Left lung (tissue), 14 donors: ENCODE measurements at regions of chr3 and their contacts with region 1.

Region 1: DNA sequence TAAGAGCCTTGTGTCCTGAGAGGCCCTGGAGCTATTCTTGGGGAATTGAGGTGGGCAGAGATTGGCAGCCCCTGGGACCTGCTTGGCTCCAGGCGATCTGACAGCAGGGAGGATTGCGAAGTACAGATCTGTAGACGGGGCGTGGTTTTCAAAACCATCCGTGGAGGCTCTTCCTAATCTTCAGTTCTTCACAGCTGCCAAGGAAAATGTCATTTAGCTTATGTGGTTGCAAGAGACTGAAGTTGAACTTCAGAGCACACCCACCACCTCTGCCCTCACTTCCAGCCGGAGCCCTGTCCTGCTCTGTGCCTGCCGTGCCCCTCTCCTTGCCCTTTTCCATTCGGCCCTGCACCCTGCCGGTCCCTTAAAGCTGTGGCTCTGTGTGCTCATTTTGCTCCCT is 12.9 kb downstream of the NISCH start:
- DNase-seq: peak in 1 of 4 donors; percentile 53
- ATAC-seq: no peak
- H3K4me3 ChIP-seq: no peak overlapping the region
- H3K27ac ChIP-seq: no peak overlapping the region
- H3K4me1 ChIP-seq: peaks cover 3 to 55% of the 10 kb centered on the region in 2 donors
- H3K27me3 ChIP-seq: no peaks in the 10 kb centered on the region
- CTCF ChIP-seq: no peak

Region 2: GRCh38 chr3:52536369-52537164 is 68.2 kb after region 1 on chr3 and contains the start of gene UQCC5:
- intact Hi-C with region 1: loop called in 1 of 2 experiments (anchors 10 kb)
- DNase-seq: peak; percentile 96 to 99 (median 99)
- ATAC-seq: peak; percentile 92
- H3K4me3 ChIP-seq: peak within 1 kb of the TSS; percentile 71 to 80
- H3K27ac ChIP-seq: peak within 1 kb of the TSS; percentile 88 to 89
- H3K4me1 ChIP-seq: peaks cover 21 to 81% of the 10 kb centered on the region in 2 donors
- H3K27me3 ChIP-seq: peaks cover 0 to 31% of the 10 kb centered on the region in 2 donors
- CTCF ChIP-seq: no peak
- polyA plus RNA-seq, gene UQCC5: 9.6 to 19.1 (median 14.9) TPM

Region 3: DNA sequence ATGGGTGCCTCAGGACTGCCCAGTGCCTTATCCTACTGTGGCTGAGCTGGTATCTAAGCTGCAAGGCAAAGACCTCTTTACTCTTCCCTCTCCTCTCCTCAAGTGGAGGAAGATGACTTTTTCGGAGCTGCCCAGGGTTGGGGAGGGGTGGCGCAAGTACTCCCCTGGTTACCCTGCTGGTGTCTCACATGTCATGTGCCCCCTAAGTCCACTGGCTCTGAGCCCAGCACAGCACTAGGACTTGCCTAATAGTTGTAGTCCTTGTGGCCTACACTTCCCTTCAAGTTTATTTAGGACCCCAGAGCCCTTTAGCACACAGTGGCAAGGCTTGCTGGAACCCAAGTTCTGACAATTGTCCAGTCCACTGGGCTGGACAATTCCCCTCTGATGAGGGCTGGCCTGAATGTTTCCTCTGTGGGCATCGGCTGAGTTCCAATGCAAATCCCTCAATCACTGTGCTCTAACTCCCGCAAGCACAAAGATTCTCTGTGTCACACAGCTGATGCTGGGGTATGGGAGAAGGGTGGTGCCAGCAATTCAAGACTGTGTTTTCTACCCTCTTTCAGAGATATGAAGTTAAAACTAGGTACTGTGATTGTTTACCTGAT is 128.4 kb after region 1 on chr3:
- intact Hi-C with region 1: no loop called
- DNase-seq: peak in 1 of 4 donors; percentile 36
- ATAC-seq: no peak
- H3K4me3 ChIP-seq: no peak overlapping the region
- H3K27ac ChIP-seq: no peak overlapping the region
- H3K4me1 ChIP-seq: no peaks in the 10 kb centered on the region
- H3K27me3 ChIP-seq: no peaks in the 10 kb centered on the region
- CTCF ChIP-seq: no peak